ENCODE measurements at regions of chr11 and their contacts with region 1.

Region 1: DNA sequence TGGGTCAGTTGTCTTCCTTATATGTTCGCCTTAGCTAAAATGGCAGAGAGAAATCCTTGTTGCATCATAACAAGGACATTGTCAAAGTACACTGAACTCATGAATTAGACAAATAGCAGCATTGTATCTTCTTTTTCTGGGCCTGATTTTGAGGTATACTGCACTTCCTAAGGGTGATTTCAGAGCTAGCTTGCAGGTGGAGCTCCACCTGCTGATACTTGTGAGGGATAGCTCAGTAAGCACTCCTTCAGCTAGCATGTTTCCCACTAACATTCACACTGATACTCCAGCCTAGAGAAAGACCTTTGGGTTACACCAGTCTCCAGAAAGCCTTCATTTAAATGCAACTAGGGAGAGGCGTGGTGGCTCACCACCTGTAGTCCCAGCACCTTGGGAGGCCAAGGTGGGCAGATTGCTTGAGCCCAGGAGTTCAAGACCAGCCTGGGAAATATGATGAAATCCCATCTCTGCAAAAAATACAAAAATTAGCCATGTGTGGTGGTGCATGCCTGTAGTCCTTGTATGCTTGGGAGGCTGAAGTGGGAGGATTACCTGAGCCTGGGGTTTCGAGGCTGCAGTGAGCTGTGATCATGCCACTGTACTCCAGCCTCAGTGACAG is 29.8 kb downstream of the JAM3 start:
- DNase-seq: peak; percentile 18
- ATAC-seq: peak; percentile 89
- H3K4me3 ChIP-seq: no peak overlapping the region
- H3K27ac ChIP-seq: no peak overlapping the region
- H3K4me1 ChIP-seq: no peaks in the 10 kb centered on the region
- H3K27me3 ChIP-seq: no peaks in the 10 kb centered on the region; a peak in 1 of 5 replicates
- CTCF ChIP-seq: peak; percentile 51
- EP300 ChIP-seq: no peak
- POLR2A ChIP-seq: no peak
- RAD21 ChIP-seq: no peak

Region 2: DNA sequence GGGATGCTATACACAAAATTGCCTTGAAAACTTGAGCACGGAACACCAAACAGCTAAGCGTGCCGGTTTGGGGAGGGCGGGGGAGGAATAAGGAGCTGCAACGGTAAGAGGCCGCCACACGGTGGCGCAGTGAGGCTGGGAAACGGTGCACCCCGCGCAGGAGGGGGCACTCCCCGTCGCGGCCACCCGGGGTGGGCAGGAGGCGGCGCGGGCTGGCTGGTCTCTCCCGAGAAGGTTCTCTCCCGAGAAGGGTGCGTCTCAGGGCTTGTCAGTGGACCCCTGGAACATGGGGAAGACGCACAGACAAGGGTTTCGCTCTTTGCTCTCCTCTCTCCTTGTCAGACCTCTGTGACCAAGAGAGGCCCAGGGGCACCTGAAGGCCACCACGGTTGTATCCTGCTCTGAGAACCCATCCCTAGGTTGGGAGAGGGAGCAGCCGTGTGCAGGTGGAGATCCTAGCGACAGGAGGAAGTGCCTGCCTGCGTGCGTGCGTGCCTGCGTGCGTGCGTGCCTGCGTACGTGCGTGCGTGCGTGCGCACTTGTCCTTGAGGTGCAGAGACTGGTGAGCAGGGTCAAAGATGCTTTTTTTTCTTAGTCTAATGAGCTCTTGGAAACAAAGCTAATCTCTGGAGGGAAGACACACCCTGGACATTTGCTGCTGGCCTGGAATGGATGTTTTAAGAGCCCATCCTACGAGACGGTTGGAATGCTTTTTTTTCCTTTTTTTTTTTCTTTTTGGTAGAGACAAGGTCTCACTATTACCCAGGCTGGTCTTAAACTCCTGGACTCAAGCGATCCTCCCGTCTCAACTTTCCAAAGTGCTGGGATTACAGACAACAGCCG is 47.9 kb before region 1 on chr11:
- CTCF ChIA-PET with region 1: interaction called, 9 read pairs
- POLR2A ChIA-PET with region 1: no interaction called
- in situ Hi-C with region 1: no loop called
- intact Hi-C with region 1: loop called (anchors 2 kb)
- DNase-seq: peak; percentile 32
- ATAC-seq: peak; percentile 92
- H3K4me3 ChIP-seq: peak overlapping the region in 1 of 3 experiments; percentile 28; a peak in 1 of 6 replicates
- H3K27ac ChIP-seq: no peak overlapping the region
- H3K4me1 ChIP-seq: no peaks in the 10 kb centered on the region
- H3K27me3 ChIP-seq: peaks cover 9 to 49% of the 10 kb centered on the region in 2 experiments; a peak in 4 of 5 replicates
- CTCF ChIP-seq: peak; percentile 92
- EP300 ChIP-seq: no peak
- POLR2A ChIP-seq: no peak
- RAD21 ChIP-seq: peak; percentile 82

Region 3: GRCh38 chr11:134157451-134157850 is 58.8 kb after region 1 on chr11:
- CTCF ChIA-PET with region 1: no interaction called
- POLR2A ChIA-PET with region 1: no interaction called
- in situ Hi-C with region 1: no loop called
- intact Hi-C with region 1: no loop called
- DNase-seq: no peak
- ATAC-seq: no peak
- H3K4me3 ChIP-seq: no peak overlapping the region
- H3K27ac ChIP-seq: no peak overlapping the region
- H3K4me1 ChIP-seq: no peaks in the 10 kb centered on the region
- H3K27me3 ChIP-seq: no peaks in the 10 kb centered on the region
- CTCF ChIP-seq: no peak
- EP300 ChIP-seq: no peak
- POLR2A ChIP-seq: no peak
- RAD21 ChIP-seq: no peak